Psoas muscle (tissue), 8 donors: ENCODE measurements at regions of chr11 and their contacts with region 1.

Region 1: DNA sequence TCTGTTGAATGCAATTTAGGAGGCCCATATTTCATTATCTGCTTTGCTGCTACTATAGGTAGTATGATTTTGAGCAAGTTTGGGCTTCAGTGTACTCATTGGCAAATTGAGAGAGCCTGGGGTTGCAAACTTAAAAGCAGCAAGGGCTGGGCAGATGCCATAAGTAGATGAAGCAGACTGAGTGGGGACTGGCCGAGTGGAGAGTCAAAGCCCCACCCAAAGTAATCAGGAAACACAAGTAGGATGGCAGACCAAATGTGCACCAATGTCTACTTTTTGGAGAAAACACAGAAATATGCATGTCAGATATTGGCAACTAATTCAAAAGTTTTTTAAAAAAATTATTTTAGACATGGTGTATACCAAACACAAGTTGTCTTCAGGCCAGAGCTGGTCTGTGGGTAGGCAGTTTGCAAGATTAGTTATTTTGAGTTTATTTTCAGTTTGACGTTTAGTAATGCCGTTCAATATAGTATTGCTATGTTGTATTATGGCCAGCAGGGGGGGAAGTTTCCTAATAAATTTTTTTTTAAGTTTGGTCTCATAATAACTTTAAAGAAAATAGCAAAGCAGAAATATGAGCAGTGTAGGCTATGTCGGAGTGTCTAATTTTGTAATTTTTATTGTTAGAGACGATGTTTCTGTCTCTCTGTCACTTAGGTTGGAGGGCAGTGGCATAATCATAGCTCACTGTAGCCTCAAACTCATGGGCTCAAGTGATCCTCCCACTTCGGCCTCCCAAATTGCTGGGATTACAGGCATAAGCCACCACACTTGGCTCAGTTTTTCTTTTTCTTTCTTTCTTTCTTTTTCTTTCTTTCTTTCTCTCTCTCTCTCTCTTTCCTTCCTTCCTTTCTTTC is 105.1 kb downstream of the HIPK3 start:
- DNase-seq: no peak
- ATAC-seq: peak in 3 of 4 donors; percentile 46 to 74 (median 55)
- H3K4me3 ChIP-seq: no peak overlapping the region
- H3K27ac ChIP-seq: no peak overlapping the region
- H3K4me1 ChIP-seq: no peaks in the 10 kb centered on the region
- H3K27me3 ChIP-seq: no peaks in the 10 kb centered on the region
- CTCF ChIP-seq: peak; percentile 66

Region 2: DNA sequence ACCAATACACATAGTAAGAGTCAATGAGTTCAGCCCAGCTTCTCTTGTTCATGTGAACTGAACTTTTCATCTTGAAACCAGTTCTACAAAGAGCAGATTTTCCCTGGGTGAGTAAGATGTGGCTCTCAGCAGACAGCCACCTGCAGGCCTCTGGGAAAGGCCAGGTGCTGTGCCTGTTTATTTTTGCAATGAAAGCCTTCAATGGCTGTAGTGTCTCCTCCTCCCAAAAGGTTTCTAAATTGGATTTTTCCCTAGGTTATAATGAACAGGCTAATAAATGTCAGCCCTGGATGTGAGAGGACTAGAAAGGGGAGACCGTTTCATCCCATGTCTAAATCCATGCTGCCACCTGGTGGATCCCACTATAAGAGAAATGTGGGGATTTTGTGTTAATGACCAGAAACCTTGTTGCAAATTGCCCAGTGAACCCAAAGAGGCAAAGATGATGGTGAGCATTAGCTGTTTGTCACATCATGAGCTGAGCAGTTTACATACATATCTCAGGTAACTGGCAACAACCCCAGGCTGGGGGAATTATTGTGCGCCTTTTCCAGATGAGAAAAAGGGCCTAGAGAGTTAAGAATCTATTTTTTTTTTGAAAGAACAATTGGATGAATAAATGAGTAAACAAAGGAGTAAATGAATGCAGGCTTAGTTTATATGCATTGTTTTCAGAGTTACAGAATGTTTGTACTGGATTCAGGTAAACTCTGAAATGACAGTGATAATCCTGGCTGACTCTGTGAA is 325.6 kb after region 1 on chr11:
- intact Hi-C with region 1: loop called (anchors 2 to 5 kb)
- DNase-seq: no peak
- ATAC-seq: no peak
- H3K4me3 ChIP-seq: no peak overlapping the region
- H3K27ac ChIP-seq: no peak overlapping the region
- H3K4me1 ChIP-seq: peaks cover 10% of the 10 kb centered on the region
- H3K27me3 ChIP-seq: no peaks in the 10 kb centered on the region
- CTCF ChIP-seq: peak; percentile 68

Region 3: GRCh38 chr11:33742249-33742851 is 380.1 kb after region 1 on chr11:
- intact Hi-C with region 1: loop called (anchors 5 kb)
- DNase-seq: no peak
- ATAC-seq: peak in 3 of 4 donors; percentile 41 to 73 (median 66)
- H3K4me3 ChIP-seq: no peak overlapping the region
- H3K27ac ChIP-seq: no peak overlapping the region
- H3K4me1 ChIP-seq: peaks cover 7% of the 10 kb centered on the region
- H3K27me3 ChIP-seq: no peaks in the 10 kb centered on the region
- CTCF ChIP-seq: peak; percentile 65

Region 4: DNA sequence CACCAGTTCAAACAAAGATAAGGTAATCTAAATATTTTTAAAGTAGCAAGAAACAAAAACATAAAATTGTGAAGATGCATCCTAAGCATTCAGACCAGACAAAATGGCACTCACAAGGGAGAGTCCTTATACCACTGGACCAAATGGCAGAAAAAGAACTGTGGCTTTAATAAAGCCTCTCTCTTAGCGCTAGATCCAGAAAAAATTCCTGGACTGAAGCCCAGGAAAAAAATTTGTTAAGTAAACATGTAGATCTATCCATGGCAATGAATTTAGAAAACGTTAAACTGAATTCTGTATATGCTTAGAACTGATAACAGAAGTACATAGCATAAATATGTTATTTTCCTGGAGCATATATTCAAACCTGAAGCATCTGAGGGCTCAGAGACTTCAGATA is 385.7 kb after region 1 on chr11:
- intact Hi-C with region 1: loop called (anchors 5 kb)
- DNase-seq: no peak
- ATAC-seq: no peak
- H3K4me3 ChIP-seq: no peak overlapping the region
- H3K27ac ChIP-seq: peak overlapping the region; percentile 58
- H3K4me1 ChIP-seq: peaks cover 29% of the 10 kb centered on the region
- H3K27me3 ChIP-seq: no peaks in the 10 kb centered on the region
- CTCF ChIP-seq: no peak

Region 5: DNA sequence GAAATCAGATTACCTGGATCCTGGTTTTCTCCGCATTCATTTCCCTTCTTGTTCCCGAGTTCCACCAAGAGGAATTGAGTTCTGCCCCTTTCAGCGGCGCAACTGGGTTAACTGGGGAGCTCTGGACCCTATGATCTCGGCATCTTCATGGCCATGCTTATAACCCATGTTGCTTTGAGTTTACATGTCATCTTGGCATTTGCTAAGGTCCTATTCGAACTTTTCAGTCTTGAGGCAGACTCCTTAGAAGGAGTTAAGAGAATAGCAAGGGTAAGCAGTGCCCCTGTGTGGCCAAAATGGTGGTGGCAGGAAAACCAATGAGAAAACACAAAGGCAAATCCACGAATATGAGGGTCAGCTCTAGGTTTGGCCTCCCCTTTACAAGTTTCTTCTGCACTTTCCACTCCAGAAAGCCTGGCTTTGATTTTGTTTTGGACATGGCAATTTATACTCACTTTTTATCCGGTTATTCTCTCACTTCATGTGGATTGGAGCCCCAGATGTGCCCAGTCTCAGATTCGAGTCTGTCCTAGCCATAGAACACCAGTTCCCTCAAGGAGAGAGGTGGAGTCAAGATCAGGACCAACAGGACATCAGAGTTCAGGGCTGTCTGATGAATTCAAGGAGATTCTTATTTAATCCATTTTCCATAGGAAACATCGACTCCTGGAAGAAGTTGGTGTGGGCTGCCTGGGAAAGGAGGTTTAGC is 467.3 kb after region 1 on chr11:
- intact Hi-C with region 1: loop called (anchors 5 to 10 kb)
- DNase-seq: peak; percentile 40 to 61
- ATAC-seq: peak; percentile 78 to 97 (median 87)
- H3K4me3 ChIP-seq: peak overlapping the region; percentile 67
- H3K27ac ChIP-seq: no peak overlapping the region
- H3K4me1 ChIP-seq: no peaks in the 10 kb centered on the region
- H3K27me3 ChIP-seq: peaks cover 0 to 13% (median 5%) of the 10 kb centered on the region in 3 donors
- CTCF ChIP-seq: peak; percentile 85